ENCODE measurements at regions of chr2 and their contacts with region 1.

Region 1: GRCh38 chr2:46029332-46029811 is 267.8 kb upstream of the EPAS1 start:
- DNase-seq: no peak

Region 2: DNA sequence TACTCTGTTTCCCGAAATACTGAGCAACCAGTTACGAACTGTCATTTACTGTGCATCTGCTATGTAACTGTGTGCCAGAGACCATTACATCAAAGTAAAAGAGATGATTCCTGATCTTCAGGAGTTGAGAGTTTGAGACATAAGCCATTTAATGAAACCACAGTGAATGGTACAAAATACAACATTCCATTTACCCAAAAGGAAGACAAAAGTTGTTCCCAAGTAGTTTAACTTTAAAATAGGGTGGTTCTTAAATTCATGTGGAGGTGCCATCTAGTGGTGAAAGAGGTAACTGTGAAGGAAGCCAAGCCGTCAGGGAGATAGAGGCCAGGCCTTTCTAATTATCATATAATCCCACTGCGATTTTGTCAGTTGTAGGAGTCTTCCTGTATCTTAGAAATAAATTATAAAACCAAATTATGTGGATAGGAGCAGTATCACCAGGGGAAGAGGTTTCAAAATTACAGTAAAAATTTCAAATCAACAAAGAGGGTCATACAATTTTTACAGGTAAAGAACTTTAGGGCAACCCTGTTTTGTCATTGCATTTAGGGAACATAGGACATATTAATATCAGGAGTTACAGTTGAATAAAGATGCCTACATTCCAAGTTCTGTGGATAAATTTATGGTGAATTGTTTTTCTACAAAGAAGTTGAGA is 335.6 kb after region 1 on chr2:
- in situ Hi-C with region 1: loop called (anchors 25 kb)
- DNase-seq: peak; percentile 68